Caco-2 (cell line): ENCODE measurements at regions of chr7 and their contacts with region 1.

Region 1: GRCh38 chr7:103447073-103447951 is 1.3 kb upstream of the SLC26A5 start:
- DNase-seq: peak; percentile 73 to 78
- H3K4me3 ChIP-seq: no peak overlapping the region
- H3K4me3 Mint-ChIP-seq: peak overlapping the region; percentile 10
- H3K27ac Mint-ChIP-seq: no peak overlapping the region
- H3K4me1 ChIP-seq: peaks cover 8% of the 10 kb centered on the region
- H3K4me1 Mint-ChIP-seq: no peaks in the 10 kb centered on the region
- H3K27me3 ChIP-seq: no peaks in the 10 kb centered on the region
- H3K27me3 Mint-ChIP-seq: peaks cover 10% of the 10 kb centered on the region
- CTCF ChIP-seq: peak; percentile 75 to 94

Region 2: GRCh38 chr7:103573479-103574058 is 126.3 kb after region 1 on chr7:
- CTCF ChIA-PET with region 1: no interaction called
- POLR2A ChIA-PET with region 1: no interaction called
- intact Hi-C with region 1: loop called (anchors 2 kb)
- DNase-seq: peak in 1 of 2 experiments; percentile 19
- H3K4me3 ChIP-seq: no peak overlapping the region
- H3K4me3 Mint-ChIP-seq: no peak overlapping the region
- H3K27ac Mint-ChIP-seq: no peak overlapping the region
- H3K4me1 ChIP-seq: peaks cover 36% of the 10 kb centered on the region
- H3K4me1 Mint-ChIP-seq: peaks cover 36% of the 10 kb centered on the region
- H3K27me3 ChIP-seq: no peaks in the 10 kb centered on the region
- H3K27me3 Mint-ChIP-seq: no peaks in the 10 kb centered on the region
- CTCF ChIP-seq: peak; percentile 40 to 54

Region 3: DNA sequence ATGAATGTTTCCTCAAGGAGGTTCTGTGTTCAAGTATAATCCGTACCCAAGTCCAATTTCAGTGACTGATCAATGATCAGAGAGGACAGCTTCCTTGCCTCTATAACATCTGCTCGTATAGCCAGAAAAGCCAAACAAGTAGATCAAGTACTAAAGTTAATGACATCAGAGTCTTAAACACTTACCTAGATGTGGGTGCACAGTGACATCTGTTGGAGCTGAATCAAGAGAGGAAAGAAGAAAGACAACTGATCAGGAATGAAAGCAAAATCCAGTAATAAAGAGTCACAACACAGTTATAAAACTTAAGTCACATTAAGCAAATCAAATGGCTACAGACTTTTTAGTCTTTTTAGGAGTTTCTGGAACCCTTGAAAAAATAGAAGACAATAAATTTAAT is 305.7 kb after region 1 on chr7:
- CTCF ChIA-PET with region 1: no interaction called
- POLR2A ChIA-PET with region 1: no interaction called
- intact Hi-C with region 1: loop called (anchors 10 kb)
- DNase-seq: peak in 1 of 2 experiments; percentile 32
- H3K4me3 ChIP-seq: no peak overlapping the region
- H3K4me3 Mint-ChIP-seq: no peak overlapping the region
- H3K27ac Mint-ChIP-seq: no peak overlapping the region
- H3K4me1 ChIP-seq: no peaks in the 10 kb centered on the region
- H3K4me1 Mint-ChIP-seq: no peaks in the 10 kb centered on the region
- H3K27me3 ChIP-seq: no peaks in the 10 kb centered on the region
- H3K27me3 Mint-ChIP-seq: no peaks in the 10 kb centered on the region
- CTCF ChIP-seq: peak; percentile 28 to 45